Activated T-helper 2 cell treated with anti-CD3 and anti-CD28 coated beads, Interferon-gamma antibody, Interleukin-2, Interleukin-4, amounts not matched to agents 10 μg/mL and 5 μg/mL and 100 μg/mL, durations not matched to agents 14 hours and 24 hours and 36 hours (primary cell): ENCODE measurements at regions of chrX and their contacts with region 1.

Region 1: GRCh38 chrX:19682712-19683331 is 167.5 kb upstream of the MAP3K15 start:
- DNase-seq: peak; percentile 71
- H3K4me3 Mint-ChIP-seq: peak overlapping the region; percentile 75
- H3K27ac Mint-ChIP-seq: peak overlapping the region; percentile 98
- H3K4me1 Mint-ChIP-seq: peaks cover 73% of the 10 kb centered on the region
- H3K27me3 Mint-ChIP-seq: no peaks in the 10 kb centered on the region

Region 2: GRCh38 chrX:19566359-19567222 is 116.2 kb before region 1 on chrX:
- intact Hi-C with region 1: loop called (anchors 5 kb)
- DNase-seq: peak; percentile 8
- H3K4me3 Mint-ChIP-seq: peak overlapping the region; percentile 14
- H3K27ac Mint-ChIP-seq: peak overlapping the region; percentile 91
- H3K4me1 Mint-ChIP-seq: peaks cover 38% of the 10 kb centered on the region
- H3K27me3 Mint-ChIP-seq: no peaks in the 10 kb centered on the region

Region 3: GRCh38 chrX:19625612-19626011 is 57.2 kb before region 1 on chrX:
- intact Hi-C with region 1: loop called (anchors 2 kb)
- DNase-seq: peak; percentile 16
- H3K4me3 Mint-ChIP-seq: no peak overlapping the region
- H3K27ac Mint-ChIP-seq: peak overlapping the region; percentile 92
- H3K4me1 Mint-ChIP-seq: peaks cover 49% of the 10 kb centered on the region
- H3K27me3 Mint-ChIP-seq: no peaks in the 10 kb centered on the region

Region 4: GRCh38 chrX:19642241-19643109 is 40.3 kb before region 1 on chrX:
- intact Hi-C with region 1: loop called (anchors 2 kb)
- DNase-seq: no peak
- H3K4me3 Mint-ChIP-seq: no peak overlapping the region
- H3K27ac Mint-ChIP-seq: peak overlapping the region; percentile 69
- H3K4me1 Mint-ChIP-seq: peaks cover 18% of the 10 kb centered on the region
- H3K27me3 Mint-ChIP-seq: no peaks in the 10 kb centered on the region

Region 5: GRCh38 chrX:19709812-19710518 is 27.1 kb after region 1 on chrX:
- intact Hi-C with region 1: loop called (anchors 2 kb)
- DNase-seq: no peak
- H3K4me3 Mint-ChIP-seq: no peak overlapping the region
- H3K27ac Mint-ChIP-seq: no peak overlapping the region
- H3K4me1 Mint-ChIP-seq: peaks cover 32% of the 10 kb centered on the region
- H3K27me3 Mint-ChIP-seq: no peaks in the 10 kb centered on the region

Region 6: DNA sequence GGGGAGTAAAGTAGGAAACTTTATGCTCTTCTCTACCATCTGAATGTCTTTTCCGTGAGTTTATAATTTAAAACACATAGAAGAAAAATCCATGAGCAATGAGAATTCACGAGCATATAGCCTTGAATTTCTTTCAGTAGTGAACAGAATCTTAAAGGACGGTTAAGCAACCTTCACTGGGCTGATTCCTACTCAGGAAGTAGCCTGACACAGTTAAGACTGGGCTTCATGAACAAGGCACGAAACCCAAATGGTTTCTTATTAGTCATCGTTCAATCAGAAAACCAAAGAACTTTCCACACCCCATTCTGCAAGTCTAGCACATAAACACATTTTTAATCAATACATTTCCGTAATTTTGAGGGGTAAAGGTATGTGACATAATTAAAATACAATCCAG is 108.7 kb after region 1 on chrX:
- intact Hi-C with region 1: loop called (anchors 5 kb)
- DNase-seq: no peak
- H3K4me3 Mint-ChIP-seq: peak overlapping the region; percentile 33
- H3K27ac Mint-ChIP-seq: peak overlapping the region; percentile 82
- H3K4me1 Mint-ChIP-seq: peaks cover 44% of the 10 kb centered on the region
- H3K27me3 Mint-ChIP-seq: no peaks in the 10 kb centered on the region

Region 7: DNA sequence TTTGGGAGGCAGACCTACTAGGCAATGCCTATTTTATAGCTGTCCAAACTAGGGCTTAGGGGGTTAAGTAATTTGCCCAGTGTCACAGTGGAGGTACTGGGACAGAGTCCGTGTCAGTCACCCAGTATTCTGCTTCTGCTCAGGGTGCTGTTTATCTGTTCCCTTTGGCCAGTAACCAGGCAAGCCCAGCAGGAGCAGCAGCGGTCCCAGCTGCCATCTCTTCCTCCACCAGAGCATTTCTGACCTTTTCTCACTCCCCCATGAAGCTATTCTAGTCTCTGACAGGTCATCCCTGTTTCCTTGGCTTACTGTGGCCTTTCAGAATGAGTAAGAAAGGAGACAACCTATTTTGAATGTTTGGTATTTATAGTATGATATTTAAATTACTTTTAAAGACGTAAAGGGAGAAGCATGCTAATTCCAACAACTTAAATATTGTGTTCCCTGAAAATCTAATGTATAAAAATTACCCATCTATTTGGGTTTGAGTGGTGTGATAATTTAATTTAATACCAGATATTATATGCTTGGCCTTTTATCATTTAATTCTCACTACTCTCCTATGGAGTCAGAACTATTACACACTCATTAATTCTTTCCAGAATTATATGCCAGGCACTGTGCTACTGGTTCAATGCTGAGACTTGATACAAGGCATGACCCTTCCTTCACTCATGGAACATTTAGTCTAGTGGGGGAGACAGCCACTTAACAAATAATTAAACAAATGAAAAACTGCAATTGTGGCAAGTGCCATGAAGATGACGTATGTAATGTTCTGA is 523.3 kb after region 1 on chrX:
- intact Hi-C with region 1: no loop called
- DNase-seq: no peak
- H3K4me3 Mint-ChIP-seq: no peak overlapping the region
- H3K27ac Mint-ChIP-seq: peak overlapping the region; percentile 44
- H3K4me1 Mint-ChIP-seq: peaks cover 32% of the 10 kb centered on the region
- H3K27me3 Mint-ChIP-seq: no peaks in the 10 kb centered on the region